ENCODE measurements at regions of chr1 and their contacts with region 1.

Region 1: DNA sequence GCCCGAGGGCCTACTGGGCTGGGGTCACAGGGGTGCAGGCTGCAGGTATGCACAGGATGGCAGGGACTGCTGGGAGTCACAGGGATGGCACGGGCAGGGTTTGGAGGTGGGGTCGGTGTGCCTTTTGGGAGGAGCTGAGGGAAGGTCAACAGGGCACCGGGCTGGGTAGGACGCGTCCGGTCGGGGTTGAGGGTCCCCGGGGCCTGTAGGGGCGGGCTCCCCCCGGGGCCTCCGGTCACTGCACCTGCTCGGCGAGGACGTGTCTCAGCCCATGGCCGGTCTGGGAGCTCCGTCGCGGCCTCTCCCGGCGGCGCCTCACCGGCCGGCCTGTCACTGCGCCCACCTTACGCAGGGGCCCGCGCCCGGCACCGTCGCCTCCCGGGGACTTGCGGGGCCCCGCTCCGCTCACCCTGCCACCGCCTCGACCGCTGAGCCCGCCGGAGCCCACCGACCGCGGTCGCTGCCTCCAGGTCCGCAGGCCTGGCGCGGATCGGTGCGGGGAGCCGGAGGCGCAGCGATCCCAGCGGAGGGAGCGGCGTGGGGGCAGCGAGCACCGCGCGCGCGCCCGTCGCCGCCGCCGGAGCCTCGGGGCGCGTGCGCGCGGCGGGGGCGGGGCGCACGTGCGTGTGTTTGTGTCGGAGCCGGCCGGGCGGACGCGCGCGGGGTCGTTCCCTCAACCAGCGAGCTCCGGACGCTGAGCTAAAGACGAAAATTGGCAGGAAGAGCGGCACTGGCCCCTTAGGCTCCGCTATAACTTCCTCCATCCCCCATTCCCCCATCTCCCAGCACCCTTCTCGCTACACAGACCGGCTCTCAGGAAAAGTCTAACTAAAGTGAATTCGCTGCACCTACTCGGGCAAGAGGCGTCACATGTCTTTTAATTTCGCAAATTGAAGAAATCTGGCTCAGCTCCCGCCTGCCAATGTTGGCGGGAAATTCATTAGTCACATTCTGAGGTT is at the start of gene AMIGO1:
- DNase-seq: peak; percentile 54
- H3K4me3 Mint-ChIP-seq: peak within 1 kb of the TSS; percentile 88
- H3K27ac Mint-ChIP-seq: peak within 1 kb of the TSS; percentile 73
- H3K4me1 Mint-ChIP-seq: peaks cover 59% of the 10 kb centered on the region
- H3K27me3 Mint-ChIP-seq: no peaks in the 10 kb centered on the region
- total RNA-seq, gene AMIGO1: 1.5 to 1.7 TPM

Region 2: DNA sequence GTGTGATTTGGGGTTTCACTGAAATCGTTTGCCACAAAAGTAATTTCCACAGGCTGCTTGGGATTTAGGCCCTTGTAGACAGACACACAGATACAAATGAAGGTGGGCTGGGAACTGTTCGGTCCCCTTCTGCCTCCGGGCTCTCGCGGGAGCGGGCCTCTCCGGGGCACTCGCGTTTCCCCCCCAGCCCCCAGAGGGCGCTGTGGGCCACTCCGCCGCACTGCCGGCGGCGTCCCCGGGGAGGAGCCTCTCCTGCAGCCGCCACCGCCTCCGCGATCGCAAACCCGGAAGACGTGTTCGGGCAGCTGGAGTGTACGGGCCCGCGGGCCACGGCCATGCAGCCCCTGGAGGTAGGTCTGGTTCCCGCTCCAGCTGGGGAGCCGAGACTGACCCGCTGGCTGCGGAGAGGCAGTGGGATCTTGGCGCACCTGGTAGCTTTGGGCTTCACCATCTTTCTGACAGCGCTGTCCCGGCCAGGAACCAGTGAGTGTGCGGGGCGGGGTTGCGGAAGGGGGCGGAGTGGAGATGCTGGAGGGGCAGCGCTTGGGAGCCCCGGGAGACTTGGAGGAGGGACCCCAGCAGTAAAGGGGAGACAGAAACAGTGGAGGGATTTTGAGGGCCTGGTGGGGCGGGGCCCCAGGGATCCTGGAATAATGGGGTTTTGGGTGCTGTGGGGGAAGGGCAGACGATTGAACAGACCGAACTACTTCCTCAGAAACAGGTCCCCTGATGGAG is 15.5 kb before region 1 on chr1 and contains the start of gene CYB561D1:
- CTCF ChIA-PET with region 1: interaction called, 375 read pairs
- intact Hi-C with region 1: no loop called
- DNase-seq: peak; percentile 90
- H3K4me3 Mint-ChIP-seq: peak within 1 kb of the TSS; percentile 98
- H3K27ac Mint-ChIP-seq: peak within 1 kb of the TSS; percentile 92
- H3K4me1 Mint-ChIP-seq: peaks cover 54% of the 10 kb centered on the region
- H3K27me3 Mint-ChIP-seq: no peaks in the 10 kb centered on the region
- total RNA-seq, gene CYB561D1: 6.6 to 8.5 TPM

Region 3: DNA sequence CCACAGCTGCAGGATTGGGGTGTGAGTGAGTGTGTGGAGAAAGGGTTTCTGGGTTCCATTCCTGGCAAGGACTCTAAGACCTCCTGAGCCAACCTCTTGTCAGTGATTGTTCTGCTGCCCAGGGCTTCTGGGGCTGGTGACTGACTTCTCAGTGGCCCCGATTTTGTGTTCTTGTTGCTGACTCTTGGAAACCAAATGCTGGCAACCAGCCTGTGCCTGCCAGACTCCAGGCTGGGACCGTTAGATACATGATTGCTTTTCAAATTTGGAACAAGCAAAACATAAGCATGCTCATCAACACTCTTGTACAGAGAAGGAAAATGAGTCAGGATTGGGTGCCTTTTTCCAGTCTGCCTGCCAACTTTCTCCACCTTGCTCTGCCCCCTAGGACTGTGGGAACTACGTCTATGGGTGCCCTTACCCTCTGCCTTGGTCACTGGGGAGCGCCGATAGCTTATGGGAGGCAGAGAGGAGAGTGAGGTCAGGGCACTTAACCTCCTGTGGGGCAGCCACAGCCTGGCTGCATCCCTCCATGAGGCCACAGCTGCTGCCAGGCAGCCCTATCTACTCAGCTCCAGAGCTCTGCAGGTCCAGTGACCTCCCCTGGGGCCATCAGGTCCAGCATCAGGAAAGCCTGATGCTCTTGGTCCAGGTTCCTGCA is 293.6 kb after region 1 on chr1:
- CTCF ChIA-PET with region 1: no interaction called
- intact Hi-C with region 1: no loop called
- DNase-seq: peak; percentile 29
- H3K4me3 Mint-ChIP-seq: peak overlapping the region; percentile 36
- H3K27ac Mint-ChIP-seq: peak overlapping the region; percentile 73
- H3K4me1 Mint-ChIP-seq: peaks cover 50% of the 10 kb centered on the region
- H3K27me3 Mint-ChIP-seq: no peaks in the 10 kb centered on the region